A549 (cell line): ENCODE measurements at regions of chr19 and their contacts with region 1.

Region 1: DNA sequence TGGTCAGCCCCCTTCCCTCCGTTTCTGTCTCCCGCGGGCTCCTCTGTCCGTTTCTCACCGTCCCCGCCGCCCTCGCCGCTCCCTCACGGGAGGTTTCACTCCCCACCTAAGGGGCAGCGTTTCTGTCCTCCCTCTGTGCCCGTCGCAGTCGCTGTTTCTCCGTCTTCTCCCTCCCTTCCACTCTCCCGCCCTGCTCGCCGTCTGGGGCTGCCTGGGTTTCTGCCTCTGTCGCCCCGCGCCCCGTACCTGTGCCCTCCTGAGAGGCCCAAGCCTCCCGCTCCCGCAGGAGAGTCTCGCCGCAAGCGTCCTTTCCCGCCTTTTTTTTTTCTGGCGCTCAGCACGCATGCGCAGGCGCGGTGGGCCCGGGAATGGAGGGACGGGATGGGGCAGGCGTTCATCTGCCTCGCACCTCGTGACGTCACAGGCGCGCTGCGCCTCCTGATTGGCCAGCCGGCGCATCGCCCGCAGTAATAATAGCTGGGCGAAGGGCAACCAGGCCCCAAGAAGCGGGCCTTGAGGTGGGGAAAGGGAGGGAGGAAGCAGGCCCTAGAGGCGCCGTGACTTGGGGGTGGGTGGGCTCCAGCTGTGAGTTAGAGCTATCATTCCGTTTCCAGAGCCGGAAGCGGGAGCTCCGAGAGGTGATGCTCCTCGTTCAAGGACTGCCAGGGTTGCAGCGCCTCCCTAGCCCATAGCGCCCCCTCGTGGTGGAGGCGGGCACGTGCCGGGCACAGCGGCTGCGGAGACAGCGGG is 15.4 kb downstream of the SSC5D start:
- DNase-seq: peak; percentile 95 to 96
- ATAC-seq: peak; percentile 82 to 92
- H3K4me3 ChIP-seq: peak overlapping the region; percentile 31
- H3K27ac ChIP-seq: peak overlapping the region; percentile 50 to 75; a peak in 4 of 6 replicates
- H3K4me1 ChIP-seq: no peaks in the 10 kb centered on the region
- CTCF ChIP-seq: peak; percentile 95
- EP300 ChIP-seq: no peak
- POLR2A ChIP-seq: no peak
- RAD21 ChIP-seq: peak; percentile 93 to 94

Region 2: GRCh38 chr19:55088543-55089341 is 414.9 kb before region 1 on chr19:
- CTCF ChIA-PET with region 1: interaction called, 17 read pairs
- POLR2A ChIA-PET with region 1: no interaction called
- DNase-seq: peak; percentile 71 to 81
- ATAC-seq: peak; percentile 52 to 79
- H3K4me3 ChIP-seq: no peak overlapping the region
- H3K27ac ChIP-seq: no peak overlapping the region
- H3K4me1 ChIP-seq: no peaks in the 10 kb centered on the region
- CTCF ChIP-seq: peak; percentile 93
- EP300 ChIP-seq: no peak
- POLR2A ChIP-seq: no peak
- RAD21 ChIP-seq: peak; percentile 33 to 51; a peak in 3 of 5 replicates

Region 3: GRCh38 chr19:55247608-55248099 is 256.0 kb before region 1 on chr19:
- CTCF ChIA-PET with region 1: no interaction called
- POLR2A ChIA-PET with region 1: no interaction called
- DNase-seq: peak; percentile 43 to 74
- ATAC-seq: peak; percentile 51 to 69
- H3K4me3 ChIP-seq: no peak overlapping the region
- H3K27ac ChIP-seq: peak overlapping the region in 1 of 2 experiments; percentile 58; a peak in 2 of 6 replicates
- H3K4me1 ChIP-seq: peaks cover 22% of the 10 kb centered on the region; the same call in 2 of the 3 replicates
- CTCF ChIP-seq: no peak
- EP300 ChIP-seq: no peak
- POLR2A ChIP-seq: no peak
- RAD21 ChIP-seq: no peak

Region 4: DNA sequence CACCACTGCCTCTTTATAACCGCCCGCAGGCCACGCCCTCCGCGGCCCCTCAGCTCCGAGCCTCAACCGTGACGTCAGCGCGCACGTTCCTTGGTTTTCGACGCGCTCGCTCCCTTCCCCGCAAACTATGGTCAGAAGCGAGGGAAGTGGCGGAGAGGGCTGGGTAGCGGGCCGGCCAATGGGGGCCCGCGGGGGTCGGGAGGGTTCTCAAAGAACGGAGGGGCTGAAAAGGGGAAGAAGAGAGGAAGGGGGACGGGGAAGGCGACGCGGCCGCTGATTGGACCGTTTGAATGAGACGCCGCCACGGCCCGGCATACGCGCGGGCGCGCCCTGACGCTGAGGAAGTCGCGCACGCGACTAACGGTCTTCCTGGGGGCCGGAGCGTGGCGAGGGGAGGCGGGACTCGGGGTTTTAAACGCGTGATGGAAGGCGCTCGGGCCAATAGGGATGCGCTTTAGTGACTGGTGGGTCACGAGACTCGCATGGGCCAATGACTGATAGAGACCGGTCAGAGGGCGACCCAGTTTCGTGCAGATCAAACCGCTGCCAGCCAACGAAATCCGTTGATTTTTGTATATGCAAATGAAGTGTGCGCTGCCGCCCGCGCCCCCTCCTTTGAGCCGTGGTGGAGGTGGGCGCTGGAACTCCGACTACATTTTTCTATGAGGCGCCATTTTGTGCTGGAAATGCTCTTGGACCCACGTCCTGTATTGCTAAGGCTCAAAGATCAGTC is 95.7 kb before region 1 on chr19:
- CTCF ChIA-PET with region 1: interaction called, 4 read pairs
- POLR2A ChIA-PET with region 1: interaction called, 10 read pairs
- DNase-seq: peak; percentile 100
- ATAC-seq: peak; percentile 90 to 96
- H3K4me3 ChIP-seq: peak overlapping the region; percentile 98
- H3K27ac ChIP-seq: peak overlapping the region; percentile 95 to 97
- H3K4me1 ChIP-seq: peaks cover 36% of the 10 kb centered on the region
- CTCF ChIP-seq: no peak
- EP300 ChIP-seq: no peak
- POLR2A ChIP-seq: no peak
- RAD21 ChIP-seq: no peak

Region 5: GRCh38 chr19:55461259-55461973 is 42.3 kb before region 1 on chr19 and contains the start of gene ISOC2:
- CTCF ChIA-PET with region 1: interaction called, 194 read pairs
- POLR2A ChIA-PET with region 1: interaction called, 3 read pairs
- DNase-seq: peak; percentile 100
- ATAC-seq: peak; percentile 93 to 98
- H3K4me3 ChIP-seq: peak within 1 kb of the TSS; percentile 85
- H3K27ac ChIP-seq: peak within 1 kb of the TSS; percentile 83 to 90
- H3K4me1 ChIP-seq: peaks cover 14% of the 10 kb centered on the region; the same call in 2 of the 3 replicates
- CTCF ChIP-seq: no peak
- EP300 ChIP-seq: no peak
- POLR2A ChIP-seq: peak; percentile 77
- RAD21 ChIP-seq: no peak
- polyA plus RNA-seq, gene ISOC2: 45.3 and 51.5 TPM in 2 replicates

Region 6: DNA sequence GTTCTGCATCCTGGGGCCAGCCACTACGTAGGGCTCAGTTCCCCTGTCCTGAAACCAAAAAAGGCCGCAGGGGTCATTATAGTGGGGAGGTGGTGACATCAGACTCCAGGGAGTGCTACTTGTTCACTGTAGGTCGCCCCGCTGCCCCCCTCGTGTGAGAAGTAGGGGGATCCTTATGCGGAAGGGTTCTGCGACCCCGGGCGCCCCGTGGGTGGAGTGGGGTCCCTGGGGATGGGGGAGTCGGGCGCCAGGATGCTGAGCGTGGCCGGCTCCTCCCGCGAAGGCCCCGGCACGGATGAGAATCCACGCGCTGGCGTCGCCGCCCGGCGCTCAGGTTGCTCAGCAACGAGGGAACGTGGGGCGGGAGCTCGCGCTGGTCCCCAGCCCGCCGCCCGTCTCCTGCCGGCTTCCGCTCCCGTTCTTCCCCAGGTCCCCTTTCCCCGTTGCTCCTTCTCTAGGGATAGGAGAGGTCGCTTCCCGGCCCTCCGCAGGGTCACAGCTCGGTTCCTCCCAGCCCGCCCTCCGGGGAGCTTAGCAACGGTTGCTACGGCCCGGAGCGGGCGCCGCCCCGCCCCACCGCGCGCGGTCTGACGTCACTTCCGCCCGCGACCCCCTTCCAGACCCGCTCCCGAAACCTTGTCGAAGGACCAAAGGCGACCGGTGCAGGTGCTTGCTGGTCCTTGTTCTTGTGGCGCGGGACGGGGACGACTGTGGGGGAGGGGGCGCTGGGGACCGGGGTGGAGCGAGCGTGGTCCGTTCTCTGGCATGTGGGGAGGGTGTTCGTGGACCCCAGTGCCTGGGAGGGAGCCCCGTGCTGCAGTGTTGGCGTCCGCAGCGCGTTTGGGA is 18.9 kb before region 1 on chr19 and contains the start of gene NAT14:
- CTCF ChIA-PET with region 1: interaction called, 219 read pairs
- POLR2A ChIA-PET with region 1: interaction called, 4 read pairs
- DNase-seq: peak; percentile 77 to 94
- ATAC-seq: peak; percentile 33 to 71
- H3K4me3 ChIP-seq: peak within 1 kb of the TSS; percentile 75
- H3K27ac ChIP-seq: peak within 1 kb of the TSS; percentile 89 to 93
- H3K4me1 ChIP-seq: peaks cover 50% of the 10 kb centered on the region
- CTCF ChIP-seq: no peak
- EP300 ChIP-seq: no peak
- POLR2A ChIP-seq: peak; percentile 22
- RAD21 ChIP-seq: no peak
- polyA plus RNA-seq, gene NAT14: 16.8 and 21.0 TPM in 2 replicates

Region 7: GRCh38 chr19:55586976-55587668 is 83.4 kb after region 1 on chr19:
- CTCF ChIA-PET with region 1: interaction called, 12 read pairs
- POLR2A ChIA-PET with region 1: no interaction called
- DNase-seq: peak; percentile 97 to 98
- ATAC-seq: peak; percentile 86 to 88
- H3K4me3 ChIP-seq: peak overlapping the region; percentile 43
- H3K27ac ChIP-seq: peak overlapping the region; percentile 53 to 79
- H3K4me1 ChIP-seq: peaks cover 22% of the 10 kb centered on the region
- CTCF ChIP-seq: no peak
- EP300 ChIP-seq: no peak
- POLR2A ChIP-seq: no peak
- RAD21 ChIP-seq: no peak; a peak in 1 of 5 replicates